Naive thymus-derived CD4-positive, alpha-beta T cell (primary cell): ENCODE measurements at regions of chr9 and their contacts with region 1.

Region 1: DNA sequence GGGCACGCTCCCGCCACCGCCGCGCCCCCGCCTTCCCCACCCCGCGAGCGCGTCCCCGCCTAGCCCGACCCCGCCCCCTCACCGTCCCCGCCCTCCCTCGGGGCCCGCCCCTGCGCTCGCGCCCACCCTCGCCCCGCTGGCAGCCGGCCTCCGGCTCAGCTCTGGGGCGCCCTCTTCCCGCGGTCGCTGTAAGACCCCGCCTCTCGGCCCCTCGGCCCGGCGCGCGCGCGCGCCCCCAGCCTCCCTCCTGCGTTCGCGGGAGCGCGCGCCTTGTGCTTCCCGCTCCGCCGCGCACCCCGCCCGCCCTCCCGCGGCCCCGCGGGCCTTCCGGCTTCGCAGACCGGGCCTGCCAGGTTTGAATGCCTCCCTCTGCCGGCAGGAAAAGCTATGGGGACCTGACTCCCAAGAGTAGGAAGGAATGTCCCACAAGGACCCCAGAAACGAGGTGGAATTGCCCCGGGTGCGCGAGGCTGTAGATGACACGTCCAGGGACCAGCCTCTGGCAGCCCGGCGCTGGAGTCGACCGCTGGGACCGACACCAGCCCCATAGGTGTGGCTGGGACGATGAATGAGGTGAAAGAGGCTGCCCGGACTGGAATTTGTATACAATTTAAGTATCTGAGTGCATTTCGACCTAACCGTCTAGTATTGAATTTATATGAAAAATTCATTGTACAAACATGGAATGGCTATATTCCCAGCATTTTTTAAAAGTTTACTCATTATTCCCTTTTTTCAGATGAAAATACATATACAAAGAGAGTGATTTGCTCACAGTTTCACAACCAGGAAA is 416 bp upstream of the PTBP3 start:
- DNase-seq: peak; percentile 78 to 94 (median 88)
- ATAC-seq: peak; percentile 94
- H3K4me3 ChIP-seq: peak overlapping the region; percentile 88
- H3K4me3 Mint-ChIP-seq: peak overlapping the region; percentile 82 to 98 (median 93)
- H3K27ac ChIP-seq: peak overlapping the region; percentile 95
- H3K27ac Mint-ChIP-seq: peak overlapping the region; percentile 88 to 97 (median 90)
- H3K4me1 ChIP-seq: peaks cover 14 to 19% of the 10 kb centered on the region in 2 donors
- H3K4me1 Mint-ChIP-seq: peaks cover 21 to 44% (median 35%) of the 10 kb centered on the region in 7 donors
- H3K27me3 ChIP-seq: no peaks in the 10 kb centered on the region
- H3K27me3 Mint-ChIP-seq: no peaks in the 10 kb centered on the region

Region 2: DNA sequence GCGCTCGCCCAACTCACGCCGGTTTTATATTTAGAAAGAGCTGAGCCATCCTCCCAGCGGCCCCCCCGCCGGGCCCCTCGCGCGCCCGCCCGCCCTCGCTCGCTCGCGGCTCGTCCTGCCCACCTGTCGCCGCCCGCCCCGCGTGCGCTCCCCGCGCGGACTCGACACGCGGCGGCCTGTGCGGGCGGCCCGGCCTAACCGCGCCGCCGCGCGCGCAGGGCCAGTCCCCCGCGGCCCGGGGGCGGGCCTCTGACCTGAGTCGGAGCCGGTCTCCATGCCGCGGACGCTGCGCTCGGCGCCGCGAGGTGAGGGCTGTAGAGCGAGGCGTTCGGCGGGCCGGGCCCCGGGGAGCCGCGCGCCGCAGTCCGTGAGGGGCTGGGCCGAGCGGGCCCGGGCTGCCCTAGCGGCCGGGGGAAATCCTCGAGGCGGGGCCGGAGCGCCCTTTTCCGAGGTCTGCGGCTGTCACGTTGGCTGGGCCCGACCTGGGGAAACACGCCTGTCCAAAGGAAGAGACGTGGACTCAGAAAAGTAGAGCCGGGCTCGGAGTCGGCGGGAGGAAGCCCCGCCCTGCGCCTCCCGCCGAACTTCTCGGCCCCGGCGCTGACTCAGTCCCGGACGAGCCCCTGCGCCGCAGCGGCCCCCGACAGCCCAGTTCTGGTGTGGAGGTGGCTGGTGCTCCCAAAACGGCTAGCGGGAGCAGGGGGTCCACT is 849.8 kb before region 1 on chr9 and contains the start of gene ECPAS:
- CTCF ChIA-PET with region 1: no interaction called
- POLR2A ChIA-PET with region 1: no interaction called
- intact Hi-C with region 1: loop called (anchors 2 kb)
- DNase-seq: peak; percentile 53 to 78 (median 62)
- ATAC-seq: peak; percentile 74
- H3K4me3 ChIP-seq: peak within 1 kb of the TSS; percentile 66
- H3K4me3 Mint-ChIP-seq: peak within 1 kb of the TSS; percentile 69 to 93 (median 88)
- H3K27ac ChIP-seq: peak within 1 kb of the TSS; percentile 74
- H3K27ac Mint-ChIP-seq: peak within 1 kb of the TSS; percentile 60 to 92 (median 85)
- H3K4me1 ChIP-seq: peaks cover 0 to 8% of the 10 kb centered on the region in 2 donors
- H3K4me1 Mint-ChIP-seq: peaks cover 16 to 31% (median 27%) of the 10 kb centered on the region in 7 donors
- H3K27me3 ChIP-seq: no peaks in the 10 kb centered on the region
- H3K27me3 Mint-ChIP-seq: peaks cover 0 to 13% (median 5%) of the 10 kb centered on the region in 5 donors
- total RNA-seq, gene ECPAS: 35.4 to 86.1 (median 49.2) TPM

Region 3: DNA sequence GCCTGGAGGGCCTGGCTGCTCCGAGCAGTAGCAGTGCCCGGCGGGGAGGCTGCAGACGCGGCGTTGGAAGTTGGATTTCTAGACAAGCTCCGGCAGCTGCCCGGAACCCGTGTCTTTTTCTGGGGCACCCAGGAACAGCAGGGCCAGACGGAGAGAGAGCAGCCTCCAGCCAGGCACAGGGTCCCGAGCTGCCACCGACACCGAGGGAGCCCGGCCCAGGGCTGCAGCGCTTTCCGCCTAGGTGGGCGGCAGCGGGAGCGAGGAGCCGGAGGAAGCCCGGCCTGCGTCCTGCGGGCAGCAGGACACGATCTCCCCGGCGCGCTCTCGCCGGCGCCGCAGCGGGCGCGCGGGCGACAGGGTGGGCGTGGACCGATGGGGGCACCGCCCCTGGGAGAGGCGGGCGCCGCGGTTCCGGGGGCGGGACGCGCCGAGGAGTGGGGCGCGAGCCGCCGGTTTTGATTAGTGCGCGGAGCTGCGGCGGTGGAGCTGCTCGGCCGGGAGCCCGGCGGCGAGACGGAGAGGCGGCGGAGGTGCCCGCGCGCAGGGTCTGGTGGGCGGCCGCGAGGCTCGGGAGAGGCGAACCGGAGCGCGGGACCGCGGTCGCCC is 437.4 kb before region 1 on chr9 and contains the start of gene UGCG:
- CTCF ChIA-PET with region 1: no interaction called
- POLR2A ChIA-PET with region 1: interaction called, 9 read pairs
- intact Hi-C with region 1: loop called (anchors 1 kb)
- DNase-seq: peak; percentile 80 to 95 (median 92)
- ATAC-seq: peak; percentile 97
- H3K4me3 ChIP-seq: peak within 1 kb of the TSS; percentile 87
- H3K4me3 Mint-ChIP-seq: peak within 1 kb of the TSS in 7 of 10 donors; percentile 91 to 96 (median 95)
- H3K27ac ChIP-seq: peak within 1 kb of the TSS; percentile 80
- H3K27ac Mint-ChIP-seq: peak within 1 kb of the TSS; percentile 88 to 95 (median 94)
- H3K4me1 ChIP-seq: peaks cover 17 to 40% of the 10 kb centered on the region in 2 donors
- H3K4me1 Mint-ChIP-seq: peaks cover 7 to 32% (median 29%) of the 10 kb centered on the region in 7 donors
- H3K27me3 ChIP-seq: no peaks in the 10 kb centered on the region
- H3K27me3 Mint-ChIP-seq: no peaks in the 10 kb centered on the region
- total RNA-seq, gene UGCG: 21.1 to 40.9 (median 24.5) TPM

Region 4: GRCh38 chr9:112112941-112113681 is 220.7 kb before region 1 on chr9:
- CTCF ChIA-PET with region 1: no interaction called
- POLR2A ChIA-PET with region 1: interaction called, 3 read pairs
- intact Hi-C with region 1: loop called (anchors 1 kb)
- DNase-seq: peak in 4 of 9 donors; percentile 7 to 23 (median 8)
- ATAC-seq: no peak
- H3K4me3 ChIP-seq: no peak overlapping the region
- H3K4me3 Mint-ChIP-seq: no peak overlapping the region
- H3K27ac ChIP-seq: no peak overlapping the region
- H3K27ac Mint-ChIP-seq: no peak overlapping the region
- H3K4me1 ChIP-seq: no peaks in the 10 kb centered on the region
- H3K4me1 Mint-ChIP-seq: peaks cover 0 to 5% (median 0%) of the 10 kb centered on the region in 7 donors
- H3K27me3 ChIP-seq: no peaks in the 10 kb centered on the region
- H3K27me3 Mint-ChIP-seq: no peaks in the 10 kb centered on the region

Region 5: GRCh38 chr9:112283582-112284253 is 50.1 kb before region 1 on chr9:
- CTCF ChIA-PET with region 1: no interaction called
- POLR2A ChIA-PET with region 1: no interaction called
- intact Hi-C with region 1: loop called (anchors 5 to 10 kb)
- DNase-seq: no peak
- ATAC-seq: no peak
- H3K4me3 ChIP-seq: no peak overlapping the region
- H3K4me3 Mint-ChIP-seq: no peak overlapping the region
- H3K27ac ChIP-seq: no peak overlapping the region
- H3K27ac Mint-ChIP-seq: no peak overlapping the region
- H3K4me1 ChIP-seq: no peaks in the 10 kb centered on the region
- H3K4me1 Mint-ChIP-seq: peaks cover 9 to 50% (median 32%) of the 10 kb centered on the region in 7 donors
- H3K27me3 ChIP-seq: no peaks in the 10 kb centered on the region
- H3K27me3 Mint-ChIP-seq: no peaks in the 10 kb centered on the region

Region 6: GRCh38 chr9:112361601-112362000 is 27.8 kb after region 1 on chr9:
- CTCF ChIA-PET with region 1: interaction called, 7 read pairs
- POLR2A ChIA-PET with region 1: no interaction called
- intact Hi-C with region 1: loop called in 1 of 2 experiments (anchors 1 kb)
- DNase-seq: peak in 7 of 9 donors; percentile 16 to 51 (median 40)
- ATAC-seq: peak; percentile 60
- H3K4me3 ChIP-seq: no peak overlapping the region
- H3K4me3 Mint-ChIP-seq: no peak overlapping the region
- H3K27ac ChIP-seq: no peak overlapping the region
- H3K27ac Mint-ChIP-seq: no peak overlapping the region
- H3K4me1 ChIP-seq: peaks cover 0 to 4% of the 10 kb centered on the region in 2 donors
- H3K4me1 Mint-ChIP-seq: peaks cover 0 to 4% (median 0%) of the 10 kb centered on the region in 7 donors
- H3K27me3 ChIP-seq: no peaks in the 10 kb centered on the region
- H3K27me3 Mint-ChIP-seq: peaks cover 0 to 22% (median 9%) of the 10 kb centered on the region in 5 donors

Region 7: GRCh38 chr9:112750111-112750767 is 416.4 kb after region 1 on chr9 and contains the start of gene SNX30:
- CTCF ChIA-PET with region 1: no interaction called
- POLR2A ChIA-PET with region 1: no interaction called
- intact Hi-C with region 1: loop called (anchors 1 to 5 kb)
- DNase-seq: peak; percentile 66 to 83 (median 75)
- ATAC-seq: peak; percentile 94
- H3K4me3 ChIP-seq: peak within 1 kb of the TSS; percentile 70
- H3K4me3 Mint-ChIP-seq: peak within 1 kb of the TSS; percentile 88 to 94 (median 92)
- H3K27ac ChIP-seq: peak within 1 kb of the TSS; percentile 68
- H3K27ac Mint-ChIP-seq: peak within 1 kb of the TSS; percentile 88 to 98 (median 96)
- H3K4me1 ChIP-seq: peaks cover 46% of the 10 kb centered on the region in 2 donors
- H3K4me1 Mint-ChIP-seq: peaks cover 39 to 66% (median 60%) of the 10 kb centered on the region in 7 donors
- H3K27me3 ChIP-seq: no peaks in the 10 kb centered on the region
- H3K27me3 Mint-ChIP-seq: peaks cover 0 to 4% (median 0%) of the 10 kb centered on the region in 5 donors
- total RNA-seq, gene SNX30: 6.6 to 15.8 (median 9.2) TPM

Region 8: GRCh38 chr9:114291064-114291474 is 1957.2 kb after region 1 on chr9:
- CTCF ChIA-PET with region 1: no interaction called
- POLR2A ChIA-PET with region 1: no interaction called
- intact Hi-C with region 1: no loop called
- DNase-seq: peak; percentile 30 to 73 (median 57)
- ATAC-seq: peak; percentile 65
- H3K4me3 ChIP-seq: no peak overlapping the region
- H3K4me3 Mint-ChIP-seq: no peak overlapping the region
- H3K27ac ChIP-seq: no peak overlapping the region
- H3K27ac Mint-ChIP-seq: peak overlapping the region in 1 of 9 donors; percentile 20
- H3K4me1 ChIP-seq: no peaks in the 10 kb centered on the region
- H3K4me1 Mint-ChIP-seq: peaks cover 0 to 5% (median 0%) of the 10 kb centered on the region in 7 donors
- H3K27me3 ChIP-seq: no peaks in the 10 kb centered on the region
- H3K27me3 Mint-ChIP-seq: peaks cover 2 to 7% (median 5%) of the 10 kb centered on the region in 5 donors